ENCODE measurements at regions of chr13 and their contacts with region 1.

Region 1: DNA sequence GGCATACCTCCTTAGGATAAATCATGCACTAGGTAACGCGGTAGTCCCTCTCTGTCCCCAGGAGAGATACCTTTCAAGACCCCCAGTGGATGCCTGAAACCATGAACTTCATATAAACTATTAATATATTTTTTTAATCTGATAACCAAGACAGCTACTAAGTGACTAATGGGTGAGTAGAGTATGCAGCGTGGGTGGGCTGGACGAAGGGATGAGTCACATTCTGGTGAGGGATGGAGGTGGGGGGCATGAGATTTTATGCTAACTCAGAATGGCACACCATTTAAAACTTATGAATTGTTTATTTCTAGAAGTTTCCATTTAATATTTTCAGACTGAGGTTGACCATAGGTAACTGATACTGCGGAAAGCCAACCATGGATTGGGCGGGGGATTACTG is 46.2 kb downstream of the CDK8 start:
- DNase-seq: no peak
- ATAC-seq: no peak
- H3K4me3 ChIP-seq: no peak overlapping the region
- H3K4me3 Mint-ChIP-seq: no peak overlapping the region
- H3K27ac ChIP-seq: no peak overlapping the region
- H3K27ac Mint-ChIP-seq: no peak overlapping the region
- H3K4me1 ChIP-seq: no peaks in the 10 kb centered on the region
- H3K4me1 Mint-ChIP-seq: peaks cover 73 to 84% (median 74%) of the 10 kb centered on the region in 3 donors
- H3K27me3 ChIP-seq: no peaks in the 10 kb centered on the region
- H3K27me3 Mint-ChIP-seq: no peaks in the 10 kb centered on the region

Region 2: DNA sequence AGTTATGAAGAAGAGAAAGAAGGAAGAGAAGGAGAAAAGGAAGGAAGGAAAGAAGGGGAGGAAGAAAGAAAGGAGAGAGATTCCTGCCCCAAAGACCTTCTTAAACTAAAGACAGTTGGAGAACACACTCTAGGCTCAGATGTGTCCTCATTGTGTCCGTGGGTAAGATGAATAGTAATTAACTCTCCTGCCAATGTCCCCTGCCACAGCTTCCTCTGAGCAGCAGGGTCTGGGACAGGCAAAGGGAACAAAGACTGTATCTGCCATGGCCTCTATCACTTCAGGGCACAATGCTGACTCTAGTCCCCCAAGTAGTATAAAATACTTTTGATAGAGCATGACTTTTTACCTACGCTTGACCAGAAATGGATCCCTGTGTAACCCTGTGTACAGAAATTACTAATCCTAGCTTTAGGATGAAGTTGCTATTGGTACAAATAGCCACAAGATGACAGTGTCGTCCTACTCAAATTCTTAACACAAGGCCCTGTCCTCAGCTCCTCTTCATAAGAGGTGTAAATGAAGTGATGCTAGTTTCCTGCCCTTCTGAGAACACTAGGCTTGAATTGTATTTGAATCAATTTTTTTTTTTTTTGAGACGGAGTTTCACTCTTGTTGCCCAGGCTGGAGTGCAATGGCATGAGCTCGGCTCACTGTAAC is 646.7 kb after region 1 on chr13:
- CTCF ChIA-PET with region 1: no interaction called
- POLR2A ChIA-PET with region 1: interaction called in 1 of 2 experiments, 10 read pairs
- DNase-seq: peak in 1 of 35 experiments; percentile 42
- ATAC-seq: no peak
- H3K4me3 ChIP-seq: no peak overlapping the region
- H3K4me3 Mint-ChIP-seq: no peak overlapping the region
- H3K27ac ChIP-seq: no peak overlapping the region
- H3K27ac Mint-ChIP-seq: no peak overlapping the region
- H3K4me1 ChIP-seq: no peaks in the 10 kb centered on the region
- H3K4me1 Mint-ChIP-seq: no peaks in the 10 kb centered on the region
- H3K27me3 ChIP-seq: peaks cover 0 to 4% of the 10 kb centered on the region in 2 experiments
- H3K27me3 Mint-ChIP-seq: peaks cover 4 to 5% of the 10 kb centered on the region in 2 donors

Measured in T-cell (primary cell).